Activated CD4-positive, alpha-beta T cell treated with anti-CD3 and anti-CD28 coated beads, Interleukin-2, amount 10 ng/mL, durations not matched to agents 24 days and 14 days (primary cell): ENCODE measurements at regions of chr15 and their contacts with region 1.

Region 1: GRCh38 chr15:74438721-74439316 is 5.1 kb upstream of the SEMA7A start:
- DNase-seq: peak; percentile 94
- H3K4me3 Mint-ChIP-seq: no peak overlapping the region
- H3K27ac Mint-ChIP-seq: no peak overlapping the region
- H3K4me1 Mint-ChIP-seq: peaks cover 52% of the 10 kb centered on the region
- H3K27me3 Mint-ChIP-seq: no peaks in the 10 kb centered on the region

Region 2: DNA sequence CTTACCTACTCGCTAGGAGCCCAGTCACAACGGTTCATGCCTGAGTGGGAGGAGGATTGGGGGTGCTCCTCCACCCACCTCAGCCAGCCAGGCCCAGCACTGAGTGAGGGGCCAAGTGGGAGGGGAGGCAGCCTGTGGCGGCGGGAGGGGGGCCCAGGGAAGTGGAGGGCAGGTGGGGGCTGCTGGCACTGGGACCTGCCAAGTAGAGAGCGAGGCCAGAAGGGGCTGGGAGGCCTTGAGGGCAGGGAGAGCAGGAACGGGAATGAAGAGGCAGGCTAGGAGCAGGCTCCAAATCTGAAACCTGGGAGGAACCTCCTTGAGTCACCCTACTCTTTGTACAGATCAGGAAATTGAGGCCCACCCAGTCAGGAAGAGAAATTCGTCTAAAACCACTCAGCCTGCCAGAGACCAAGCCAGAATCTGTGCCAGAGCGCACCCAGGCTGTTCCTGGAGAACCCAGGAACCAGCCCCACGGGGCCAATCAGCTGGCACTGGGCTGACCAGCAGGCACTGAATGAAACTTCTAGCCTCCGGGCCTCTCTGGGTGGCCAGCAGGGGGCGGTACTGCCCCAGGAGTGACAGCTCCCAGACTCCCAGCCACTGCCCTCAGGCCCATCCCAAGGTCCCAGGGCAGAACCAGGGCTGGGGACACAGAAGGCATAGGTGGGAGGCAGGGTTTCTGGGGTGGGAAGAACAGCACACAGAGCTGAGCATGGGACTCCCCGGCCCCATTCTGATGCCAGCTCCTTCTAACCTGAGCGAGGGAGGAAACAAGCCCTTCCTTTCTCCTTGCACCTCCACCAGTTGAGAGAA is 56.6 kb before region 1 on chr15:
- intact Hi-C with region 1: loop called (anchors 1 kb)
- DNase-seq: peak; percentile 94
- H3K4me3 Mint-ChIP-seq: no peak overlapping the region
- H3K27ac Mint-ChIP-seq: peak overlapping the region; percentile 82
- H3K4me1 Mint-ChIP-seq: peaks cover 76% of the 10 kb centered on the region
- H3K27me3 Mint-ChIP-seq: no peaks in the 10 kb centered on the region

Region 3: GRCh38 chr15:74489518-74490338 is 50.9 kb after region 1 on chr15:
- intact Hi-C with region 1: loop called (anchors 2 kb)
- DNase-seq: peak; percentile 91
- H3K4me3 Mint-ChIP-seq: peak overlapping the region; percentile 6
- H3K27ac Mint-ChIP-seq: no peak overlapping the region
- H3K4me1 Mint-ChIP-seq: peaks cover 16% of the 10 kb centered on the region
- H3K27me3 Mint-ChIP-seq: no peaks in the 10 kb centered on the region